ENCODE measurements at regions of chr5 and their contacts with region 1.

Region 1: DNA sequence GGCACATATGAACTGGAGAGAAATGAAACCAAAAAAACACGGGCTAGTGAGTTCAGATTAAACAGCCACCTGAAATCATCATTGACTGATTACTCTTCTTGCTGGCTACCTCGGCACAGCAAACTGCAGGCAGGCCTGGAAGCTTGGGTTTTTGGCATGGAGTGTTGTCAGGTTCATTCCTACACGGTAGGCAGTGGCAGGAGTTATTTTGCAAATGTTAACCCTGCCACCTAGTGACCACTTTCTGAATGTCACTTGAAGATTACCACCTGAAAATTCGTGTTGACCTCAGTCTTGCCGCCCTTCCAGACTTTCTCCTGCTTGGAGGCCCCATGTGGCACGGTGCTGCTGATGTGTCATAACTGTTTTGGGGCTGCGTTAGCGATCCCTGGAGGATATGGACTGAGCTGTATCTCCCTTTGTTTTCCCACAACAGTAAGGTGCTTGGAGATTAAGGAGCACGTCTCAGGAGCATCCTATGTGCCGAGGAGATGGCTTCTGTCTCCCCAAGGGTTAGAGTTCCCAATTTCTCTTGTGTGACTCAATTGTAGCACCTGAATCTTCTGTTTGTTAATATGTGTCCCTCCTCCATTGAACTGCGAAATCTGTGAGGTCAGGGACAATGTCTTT is 12.7 kb upstream of the CD180 start:
- DNase-seq: peak; percentile 64
- H3K4me3 ChIP-seq: no peak overlapping the region
- H3K27ac ChIP-seq: no peak overlapping the region
- H3K4me1 ChIP-seq: peaks cover 0 to 38% (median 6%) of the 10 kb centered on the region in 4 donors
- H3K27me3 ChIP-seq: no peaks in the 10 kb centered on the region
- CTCF ChIP-seq: peak; percentile 72 to 87 (median 74)
- EP300 ChIP-seq: no peak
- POLR2A ChIP-seq: no peak

Region 2: GRCh38 chr5:66807743-66808142 is 401.5 kb before region 1 on chr5:
- in situ Hi-C with region 1: loop called in 1 of 4 experiments (anchors 5 kb)
- intact Hi-C with region 1: no loop called
- DNase-seq: peak; percentile 17
- H3K4me3 ChIP-seq: no peak overlapping the region
- H3K27ac ChIP-seq: no peak overlapping the region
- H3K4me1 ChIP-seq: no peaks in the 10 kb centered on the region
- H3K27me3 ChIP-seq: no peaks in the 10 kb centered on the region
- CTCF ChIP-seq: peak in 3 of 5 experiments; percentile 31 to 38 (median 33)
- EP300 ChIP-seq: no peak
- POLR2A ChIP-seq: no peak

Region 3: GRCh38 chr5:66814146-66814991 is 394.9 kb before region 1 on chr5:
- in situ Hi-C with region 1: loop called in 1 of 4 experiments (anchors 5 kb)
- intact Hi-C with region 1: loop called (anchors 5 kb)
- DNase-seq: peak; percentile 37
- H3K4me3 ChIP-seq: no peak overlapping the region
- H3K27ac ChIP-seq: no peak overlapping the region
- H3K4me1 ChIP-seq: no peaks in the 10 kb centered on the region
- H3K27me3 ChIP-seq: no peaks in the 10 kb centered on the region
- CTCF ChIP-seq: peak; percentile 57 to 74 (median 67)
- EP300 ChIP-seq: no peak
- POLR2A ChIP-seq: no peak

Region 4: GRCh38 chr5:67156976-67157583 is 52.2 kb before region 1 on chr5:
- in situ Hi-C with region 1: loop called in 2 of 4 experiments (anchors 5 to 10 kb)
- intact Hi-C with region 1: no loop called
- DNase-seq: peak; percentile 45
- H3K4me3 ChIP-seq: no peak overlapping the region
- H3K27ac ChIP-seq: no peak overlapping the region
- H3K4me1 ChIP-seq: no peaks in the 10 kb centered on the region
- H3K27me3 ChIP-seq: no peaks in the 10 kb centered on the region
- CTCF ChIP-seq: peak; percentile 74 to 84 (median 81)
- EP300 ChIP-seq: no peak
- POLR2A ChIP-seq: no peak

Region 5: DNA sequence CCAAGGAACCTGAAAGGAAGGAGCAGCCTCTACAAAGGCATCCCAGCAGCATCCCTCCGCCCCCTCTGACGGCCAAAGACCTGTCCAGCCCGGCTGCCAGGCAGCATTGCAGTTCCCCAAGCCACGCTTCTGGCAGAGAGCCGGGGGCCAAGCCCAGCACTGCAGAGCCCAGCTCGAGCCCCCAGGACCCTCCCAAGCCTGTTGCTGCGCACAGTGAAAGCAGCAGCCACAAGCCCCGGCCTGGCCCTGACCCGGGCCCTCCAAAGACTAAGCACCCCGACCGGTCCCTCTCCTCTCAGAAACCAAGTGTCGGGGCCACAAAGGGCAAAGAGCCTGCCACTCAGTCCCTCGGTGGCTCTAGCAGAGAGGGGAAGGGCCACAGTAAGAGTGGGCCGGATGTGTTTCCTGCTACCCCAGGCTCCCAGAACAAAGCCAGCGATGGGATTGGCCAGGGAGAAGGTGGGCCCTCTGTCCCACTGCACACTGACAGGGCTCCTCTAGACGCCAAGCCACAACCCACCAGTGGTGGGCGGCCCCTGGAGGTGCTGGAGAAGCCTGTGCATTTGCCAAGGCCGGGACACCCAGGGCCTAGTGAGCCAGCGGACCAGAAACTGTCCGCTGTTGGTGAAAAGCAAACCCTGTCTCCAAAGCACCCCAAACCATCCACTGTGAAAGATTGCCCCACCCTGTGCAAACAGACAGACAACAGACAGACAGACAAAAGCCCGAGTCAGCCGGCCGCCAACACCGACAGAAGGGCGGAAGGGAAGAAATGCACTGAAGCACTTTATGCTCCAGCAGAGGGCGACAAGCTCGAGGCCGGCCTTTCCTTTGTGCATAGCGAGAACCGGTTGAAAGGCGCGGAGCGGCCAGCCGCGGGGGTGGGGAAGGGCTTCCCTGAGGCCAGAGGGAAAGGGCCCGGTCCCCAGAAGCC is 43.5 kb before region 1 on chr5:
- in situ Hi-C with region 1: loop called in 2 of 4 experiments (anchors 5 to 10 kb)
- intact Hi-C with region 1: loop called (anchors 5 kb)
- DNase-seq: peak; percentile 90
- H3K4me3 ChIP-seq: peak overlapping the region in 3 of 4 donors; percentile 21 to 43 (median 23)
- H3K27ac ChIP-seq: peak overlapping the region; percentile 75 to 84 (median 76)
- H3K4me1 ChIP-seq: peaks cover 4 to 18% (median 12%) of the 10 kb centered on the region in 4 donors
- H3K27me3 ChIP-seq: no peaks in the 10 kb centered on the region
- CTCF ChIP-seq: peak; percentile 71 to 87 (median 82)
- EP300 ChIP-seq: no peak
- POLR2A ChIP-seq: no peak

Measured in transverse colon (tissue), 4 donors.